Activated B cell treated with CpG ODN at 0.5 μM for 24 hours (primary cell): ENCODE measurements at regions of chr12 and their contacts with region 1.

Region 1: DNA sequence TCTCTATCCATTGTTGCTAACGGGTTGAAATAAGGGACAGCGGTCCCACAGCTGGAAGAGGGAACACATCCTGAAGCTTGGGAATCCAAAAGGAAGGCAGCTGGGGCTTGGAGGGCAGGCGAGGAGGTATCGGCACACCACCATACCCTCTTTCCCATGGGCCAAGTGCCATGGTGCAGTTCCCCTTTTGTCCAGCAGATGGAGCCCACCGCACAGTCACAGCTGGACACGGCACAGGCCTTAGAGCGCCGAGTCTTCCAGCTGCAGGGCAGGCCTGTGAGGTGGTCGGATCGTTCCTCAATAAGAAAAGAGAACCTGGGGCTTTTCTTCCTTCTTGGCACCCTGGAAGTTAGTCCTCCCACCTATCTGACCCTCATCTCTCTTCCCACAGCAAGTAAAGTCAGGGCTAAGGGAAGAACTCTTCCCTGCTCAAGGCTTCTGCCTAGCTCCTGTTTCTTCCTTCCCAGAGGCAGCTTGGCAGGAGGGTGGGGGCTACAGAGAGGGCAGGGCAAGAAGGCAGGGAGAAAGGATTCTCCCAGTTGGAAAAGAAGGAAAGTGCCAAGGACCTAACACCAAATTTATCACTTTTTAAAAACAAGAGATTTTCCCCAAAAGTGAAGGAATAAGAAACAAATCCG is 8.6 kb downstream of the PPP1R1A start:
- DNase-seq: peak; percentile 79
- ATAC-seq: peak; percentile 99
- H3K4me3 Mint-ChIP-seq: no peak overlapping the region
- H3K27ac Mint-ChIP-seq: no peak overlapping the region
- H3K4me1 Mint-ChIP-seq: peaks cover 6% of the 10 kb centered on the region
- H3K27me3 Mint-ChIP-seq: peaks cover 14% of the 10 kb centered on the region
- CTCF ChIP-seq: peak; percentile 80

Region 2: DNA sequence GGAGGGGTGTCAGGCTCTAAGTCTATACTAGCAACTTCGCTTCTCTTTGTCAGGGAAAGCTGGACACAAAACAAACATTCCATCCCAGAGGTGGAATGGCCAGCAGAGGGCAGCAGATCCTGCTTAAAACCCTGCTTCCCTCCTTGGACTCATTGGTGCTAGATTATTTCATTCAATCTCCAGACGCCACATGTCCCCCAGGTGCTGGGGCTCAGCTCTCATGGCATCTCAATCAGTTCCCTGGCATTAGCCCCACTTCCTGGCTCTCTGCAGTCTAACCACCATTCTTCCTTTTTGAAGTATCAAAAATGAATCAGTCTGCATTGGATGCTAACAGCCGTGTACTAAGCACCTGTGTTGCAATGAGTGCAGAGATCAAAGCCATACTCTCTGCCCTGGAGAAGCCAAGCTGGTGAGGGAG is 16.7 kb after region 1 on chr12:
- CTCF ChIA-PET with region 1: interaction called, 16 read pairs
- POLR2A ChIA-PET with region 1: no interaction called
- intact Hi-C with region 1: no loop called
- DNase-seq: no peak
- ATAC-seq: no peak
- H3K4me3 Mint-ChIP-seq: no peak overlapping the region
- H3K27ac Mint-ChIP-seq: no peak overlapping the region
- H3K4me1 Mint-ChIP-seq: no peaks in the 10 kb centered on the region
- H3K27me3 Mint-ChIP-seq: peaks cover 24% of the 10 kb centered on the region
- CTCF ChIP-seq: no peak

Region 3: DNA sequence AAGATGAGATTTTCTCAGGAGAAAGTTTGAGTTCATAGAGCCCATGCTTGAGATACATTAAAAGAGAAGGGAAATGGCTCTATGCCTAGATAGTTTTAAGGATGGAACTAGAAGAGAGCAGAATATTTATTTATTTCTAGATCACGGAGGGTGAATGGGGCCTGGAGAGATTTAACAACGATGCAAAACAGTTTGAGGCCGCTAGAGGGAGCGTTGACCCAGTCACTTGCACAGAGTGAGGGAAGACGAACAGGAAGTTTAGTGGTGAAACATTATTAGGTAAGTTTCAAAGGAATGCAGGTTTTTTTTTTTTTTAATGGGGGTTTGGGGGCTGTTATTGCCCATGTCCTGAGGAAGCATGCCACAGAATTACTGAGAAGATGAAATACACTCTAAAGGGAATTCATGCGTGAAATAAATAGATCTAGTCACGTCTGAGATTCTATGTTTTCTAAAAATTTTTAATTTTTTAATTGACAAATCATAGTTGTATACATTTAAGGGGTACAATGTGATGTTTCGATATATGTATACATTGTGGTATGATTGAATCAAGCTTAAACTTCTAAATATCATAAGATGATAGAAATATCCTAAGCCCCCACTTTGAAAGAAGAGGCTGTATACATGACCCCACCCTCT is 23.5 kb after region 1 on chr12:
- CTCF ChIA-PET with region 1: interaction called, 16 read pairs
- POLR2A ChIA-PET with region 1: interaction called, 3 read pairs
- intact Hi-C with region 1: loop called (anchors 1 kb)
- DNase-seq: no peak
- ATAC-seq: peak; percentile 85
- H3K4me3 Mint-ChIP-seq: no peak overlapping the region
- H3K27ac Mint-ChIP-seq: no peak overlapping the region
- H3K4me1 Mint-ChIP-seq: peaks cover 2% of the 10 kb centered on the region
- H3K27me3 Mint-ChIP-seq: peaks cover 7% of the 10 kb centered on the region
- CTCF ChIP-seq: peak; percentile 71

Region 4: GRCh38 chr12:54631988-54632728 is 52.3 kb after region 1 on chr12:
- CTCF ChIA-PET with region 1: no interaction called
- POLR2A ChIA-PET with region 1: no interaction called
- intact Hi-C with region 1: no loop called
- DNase-seq: no peak
- ATAC-seq: no peak
- H3K4me3 Mint-ChIP-seq: no peak overlapping the region
- H3K27ac Mint-ChIP-seq: no peak overlapping the region
- H3K4me1 Mint-ChIP-seq: no peaks in the 10 kb centered on the region
- H3K27me3 Mint-ChIP-seq: peaks cover 28% of the 10 kb centered on the region
- CTCF ChIP-seq: no peak